MCF 10A (cell line): ENCODE measurements at regions of chr1 and their contacts with region 1.

Region 1: GRCh38 chr1:66446261-66447001 is 87.5 kb upstream of the SGIP1 start:
- DNase-seq: peak; percentile 68
- H3K4me3 Mint-ChIP-seq: no peak overlapping the region
- H3K27ac Mint-ChIP-seq: no peak overlapping the region
- H3K4me1 Mint-ChIP-seq: no peaks in the 10 kb centered on the region
- H3K27me3 Mint-ChIP-seq: no peaks in the 10 kb centered on the region
- CTCF ChIP-seq: peak; percentile 75

Region 2: DNA sequence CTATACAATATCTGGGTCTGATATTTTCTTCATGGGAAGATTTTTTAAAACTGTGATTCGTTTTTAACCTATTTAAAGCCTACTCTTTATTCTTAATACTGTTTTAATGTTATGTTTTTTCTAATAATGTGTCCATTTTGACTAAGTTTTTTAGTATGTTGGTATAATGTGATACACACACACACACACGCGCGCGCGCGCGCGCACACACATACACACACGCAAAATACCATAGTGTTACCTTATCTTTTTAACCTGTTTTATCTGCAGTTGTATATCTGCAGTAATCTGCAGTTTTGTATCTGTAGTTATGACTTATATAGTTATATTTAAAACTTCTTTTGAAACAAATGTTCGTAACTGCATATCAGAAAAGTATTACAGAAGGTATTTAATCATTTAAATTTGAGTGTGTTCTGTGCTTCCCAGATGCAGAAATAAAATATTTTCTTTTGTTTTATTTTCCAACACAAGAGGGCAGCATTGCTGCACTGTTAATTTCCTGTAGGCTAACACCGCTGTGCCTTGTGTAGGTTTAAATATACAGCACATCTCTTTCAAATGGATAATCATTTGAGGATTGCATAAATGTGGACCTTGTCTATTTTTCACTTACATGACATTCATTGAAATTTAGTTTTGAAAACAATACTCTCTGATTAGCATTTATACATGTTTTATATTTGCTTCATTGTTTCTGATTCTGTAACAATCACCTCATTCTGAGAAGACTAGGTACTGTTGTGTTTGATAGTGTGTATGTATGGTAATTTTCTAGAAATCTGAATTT is 487.7 kb before region 1 on chr1:
- CTCF ChIA-PET with region 1: interaction called, 66 read pairs
- POLR2A ChIA-PET with region 1: interaction called, 3 read pairs
- intact Hi-C with region 1: loop called (anchors 1 kb)
- DNase-seq: peak; percentile 62
- H3K4me3 Mint-ChIP-seq: no peak overlapping the region
- H3K27ac Mint-ChIP-seq: no peak overlapping the region
- H3K4me1 Mint-ChIP-seq: no peaks in the 10 kb centered on the region
- H3K27me3 Mint-ChIP-seq: no peaks in the 10 kb centered on the region
- CTCF ChIP-seq: peak; percentile 60

Region 3: GRCh38 chr1:66282343-66282852 is 164.0 kb before region 1 on chr1:
- CTCF ChIA-PET with region 1: interaction called, 11 read pairs
- POLR2A ChIA-PET with region 1: interaction called, 3 read pairs
- intact Hi-C with region 1: no loop called
- DNase-seq: peak; percentile 87
- H3K4me3 Mint-ChIP-seq: no peak overlapping the region
- H3K27ac Mint-ChIP-seq: peak overlapping the region; percentile 90
- H3K4me1 Mint-ChIP-seq: peaks cover 22% of the 10 kb centered on the region
- H3K27me3 Mint-ChIP-seq: no peaks in the 10 kb centered on the region
- CTCF ChIP-seq: no peak

Region 4: DNA sequence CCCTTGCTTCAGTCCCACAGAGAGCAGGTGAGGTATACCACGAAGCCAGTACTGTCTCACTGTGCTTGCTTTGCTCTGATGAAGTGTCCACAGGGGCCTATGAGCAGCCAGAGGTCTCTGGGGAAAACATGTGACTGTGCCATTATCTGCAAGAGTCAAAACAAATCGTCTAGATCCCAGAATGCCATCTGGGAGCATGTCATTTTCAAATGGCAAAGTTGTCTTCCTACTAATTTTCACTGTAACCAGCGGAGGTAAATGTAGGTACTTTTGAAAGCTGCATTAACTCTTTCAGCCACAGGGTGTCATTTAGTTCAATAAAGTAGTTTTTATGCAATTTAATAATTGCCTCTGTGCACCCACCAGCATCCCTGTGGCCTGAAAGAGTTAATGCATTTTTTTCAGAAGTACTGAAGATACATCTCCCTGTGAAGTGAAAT is 86.1 kb before region 1 on chr1:
- CTCF ChIA-PET with region 1: interaction called, 10 read pairs
- POLR2A ChIA-PET with region 1: no interaction called
- intact Hi-C with region 1: no loop called
- DNase-seq: no peak
- H3K4me3 Mint-ChIP-seq: no peak overlapping the region
- H3K27ac Mint-ChIP-seq: no peak overlapping the region
- H3K4me1 Mint-ChIP-seq: no peaks in the 10 kb centered on the region
- H3K27me3 Mint-ChIP-seq: no peaks in the 10 kb centered on the region
- CTCF ChIP-seq: no peak

Region 5: DNA sequence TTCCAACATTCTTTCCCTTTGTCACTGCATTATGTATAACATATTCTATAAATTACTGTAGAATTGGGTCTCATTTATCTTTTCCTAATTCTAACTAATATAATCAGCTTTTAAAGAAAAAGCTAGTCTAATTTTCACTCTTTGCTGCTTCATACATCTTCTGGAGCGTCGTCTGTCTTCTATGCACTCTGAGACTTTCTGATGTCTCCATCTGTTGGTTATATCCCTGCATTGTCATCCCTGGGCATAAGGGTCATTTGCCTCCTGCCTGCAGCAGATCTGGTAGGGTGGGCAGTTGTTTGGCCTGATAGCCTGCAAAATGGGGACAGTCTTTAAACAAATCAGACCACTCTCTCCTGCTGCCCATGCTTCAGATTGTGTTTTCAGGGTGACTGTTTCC is 265.0 kb after region 1 on chr1:
- CTCF ChIA-PET with region 1: interaction called, 6 read pairs
- POLR2A ChIA-PET with region 1: no interaction called
- intact Hi-C with region 1: loop called (anchors 5 kb)
- DNase-seq: peak; percentile 19
- H3K4me3 Mint-ChIP-seq: no peak overlapping the region
- H3K27ac Mint-ChIP-seq: no peak overlapping the region
- H3K4me1 Mint-ChIP-seq: no peaks in the 10 kb centered on the region
- H3K27me3 Mint-ChIP-seq: no peaks in the 10 kb centered on the region
- CTCF ChIP-seq: peak; percentile 28